Activated CD8-positive, alpha-beta T cell treated with anti-CD3 and anti-CD28 coated beads, Interleukin-2, amount 10 ng/mL, durations not matched to agents 7 days and 5 days (primary cell): ENCODE measurements at regions of chr1 and their contacts with region 1.

Region 1: DNA sequence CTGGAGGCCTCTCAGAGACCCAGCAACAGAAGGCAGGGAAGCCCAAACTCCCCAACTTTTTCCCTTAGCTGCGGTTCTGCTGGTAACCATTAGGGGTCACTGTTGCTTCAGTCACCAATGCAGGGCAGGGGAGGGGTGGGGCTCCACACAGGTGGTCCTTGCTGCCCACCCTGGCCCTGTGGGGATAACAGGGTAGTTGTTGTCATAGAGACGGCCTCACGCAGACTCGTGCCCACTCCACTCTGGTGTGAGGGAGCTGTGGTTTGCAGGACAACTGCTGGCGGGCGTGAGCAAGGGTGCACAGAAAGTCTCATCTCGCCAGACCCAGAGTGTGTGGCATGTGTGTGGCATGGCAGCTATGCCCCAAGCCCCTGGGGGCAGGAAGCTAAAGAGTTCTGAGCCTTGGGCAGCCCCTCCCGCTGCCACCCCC is 19.9 kb downstream of the INSRR start:
- DNase-seq: peak; percentile 67
- ATAC-seq: peak; percentile 66
- H3K4me3 Mint-ChIP-seq: no peak overlapping the region
- H3K27ac Mint-ChIP-seq: no peak overlapping the region
- H3K4me1 Mint-ChIP-seq: peaks cover 48% of the 10 kb centered on the region
- H3K27me3 Mint-ChIP-seq: peaks cover 17% of the 10 kb centered on the region

Region 2: DNA sequence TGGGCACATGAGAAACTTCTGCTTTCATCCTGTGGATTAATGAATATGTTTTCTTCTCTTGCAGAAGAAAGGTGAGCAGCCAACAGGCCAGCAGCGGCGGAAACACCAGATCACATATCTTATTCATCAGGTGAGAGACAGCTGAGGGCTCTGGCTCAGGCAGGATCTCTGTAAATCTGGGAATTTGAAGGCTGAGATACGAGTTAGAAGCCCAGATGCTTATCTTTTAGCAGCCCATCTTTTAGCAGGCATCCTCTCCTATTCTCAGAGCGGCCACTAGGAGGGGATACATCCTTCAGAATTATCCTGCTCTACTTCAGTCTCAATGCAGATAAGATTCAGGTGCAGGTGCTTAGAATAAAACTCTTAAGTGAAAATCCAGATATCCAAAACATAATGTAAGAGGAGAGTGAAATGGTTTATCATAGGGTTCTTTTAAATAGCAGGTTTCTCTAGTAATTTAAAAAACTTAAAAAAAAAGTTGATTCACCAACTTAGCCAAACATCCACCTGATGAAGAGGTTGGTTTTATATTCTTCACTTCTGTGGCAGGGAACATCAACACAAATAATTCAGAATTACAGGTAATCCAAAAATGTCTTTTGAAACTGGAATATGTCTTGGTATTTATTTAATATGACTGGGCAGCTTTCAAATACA is 41.7 kb before region 1 on chr1:
- CTCF ChIA-PET with region 1: interaction called, 47 read pairs
- POLR2A ChIA-PET with region 1: interaction called, 5 read pairs
- DNase-seq: peak; percentile 81
- ATAC-seq: peak; percentile 76
- H3K4me3 Mint-ChIP-seq: no peak overlapping the region
- H3K27ac Mint-ChIP-seq: no peak overlapping the region
- H3K4me1 Mint-ChIP-seq: peaks cover 24% of the 10 kb centered on the region
- H3K27me3 Mint-ChIP-seq: no peaks in the 10 kb centered on the region

Region 3: DNA sequence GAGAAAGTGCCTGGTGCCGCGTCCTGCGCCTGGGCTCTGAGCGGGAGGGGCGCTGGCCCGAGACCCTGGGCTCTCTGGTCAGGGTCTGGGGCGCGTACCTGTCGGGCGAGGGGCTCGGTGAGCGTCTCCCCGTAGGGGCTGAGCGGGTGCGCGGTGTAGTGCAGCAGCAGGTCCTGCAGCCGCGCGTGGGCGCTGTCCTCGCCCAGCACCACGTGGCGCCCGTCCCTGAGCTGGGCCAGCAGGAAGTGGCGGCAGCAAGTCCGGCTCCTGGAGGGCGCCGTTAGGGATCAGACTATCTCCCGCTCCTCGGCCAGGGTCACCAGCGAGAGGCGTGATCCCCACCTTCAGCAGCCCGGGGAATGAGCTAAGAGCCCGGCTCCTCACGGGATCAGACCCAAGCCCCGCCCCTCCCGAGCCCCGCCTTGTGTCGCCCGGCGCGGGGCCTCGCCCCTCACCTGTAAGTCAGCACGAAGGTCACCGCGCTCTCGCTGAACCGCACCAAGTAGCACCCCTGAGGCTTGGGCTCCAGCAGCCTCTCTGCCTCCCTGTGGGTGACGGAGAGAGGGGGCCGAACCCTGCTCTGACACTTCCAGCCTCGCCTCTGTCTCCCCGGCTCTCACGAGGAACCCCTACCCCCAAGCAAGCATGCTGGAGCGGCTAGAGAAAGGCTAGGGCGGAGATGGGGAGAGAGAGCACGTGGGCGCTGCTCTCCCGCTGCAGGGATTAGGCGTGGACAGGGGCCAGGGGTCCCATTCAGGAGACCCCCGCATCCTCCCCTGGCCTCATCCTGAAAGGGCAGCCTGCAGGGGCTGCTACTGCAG is 25.0 kb before region 1 on chr1:
- CTCF ChIA-PET with region 1: interaction called, 98 read pairs
- POLR2A ChIA-PET with region 1: interaction called, 6 read pairs
- DNase-seq: peak; percentile 83
- ATAC-seq: peak; percentile 55
- H3K4me3 Mint-ChIP-seq: peak overlapping the region; percentile 92
- H3K27ac Mint-ChIP-seq: peak overlapping the region; percentile 100
- H3K4me1 Mint-ChIP-seq: peaks cover 70% of the 10 kb centered on the region
- H3K27me3 Mint-ChIP-seq: no peaks in the 10 kb centered on the region

Region 4: DNA sequence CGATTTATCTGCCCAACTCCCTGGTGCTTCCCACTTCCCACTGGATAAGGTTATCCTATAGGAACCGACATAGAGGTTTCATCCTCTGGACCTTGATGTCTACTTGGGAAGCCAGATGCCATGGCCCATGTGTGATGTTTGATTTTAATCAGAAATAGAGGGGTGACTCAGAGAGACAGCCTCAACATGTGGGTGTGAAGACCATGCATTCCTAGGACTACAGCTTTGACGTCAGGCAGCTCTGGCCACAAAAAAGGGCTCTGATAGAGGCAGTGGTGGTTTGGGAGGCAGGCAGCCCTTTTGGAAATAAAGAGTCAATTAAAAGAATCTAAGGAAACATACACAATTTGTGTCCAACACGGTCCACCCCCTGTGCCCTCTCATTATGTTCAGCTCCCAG is 17.2 kb before region 1 on chr1:
- CTCF ChIA-PET with region 1: interaction called, 98 read pairs
- POLR2A ChIA-PET with region 1: interaction called, 5 read pairs
- DNase-seq: no peak
- ATAC-seq: peak; percentile 12
- H3K4me3 Mint-ChIP-seq: no peak overlapping the region
- H3K27ac Mint-ChIP-seq: no peak overlapping the region
- H3K4me1 Mint-ChIP-seq: peaks cover 39% of the 10 kb centered on the region
- H3K27me3 Mint-ChIP-seq: peaks cover 2% of the 10 kb centered on the region

Region 5: DNA sequence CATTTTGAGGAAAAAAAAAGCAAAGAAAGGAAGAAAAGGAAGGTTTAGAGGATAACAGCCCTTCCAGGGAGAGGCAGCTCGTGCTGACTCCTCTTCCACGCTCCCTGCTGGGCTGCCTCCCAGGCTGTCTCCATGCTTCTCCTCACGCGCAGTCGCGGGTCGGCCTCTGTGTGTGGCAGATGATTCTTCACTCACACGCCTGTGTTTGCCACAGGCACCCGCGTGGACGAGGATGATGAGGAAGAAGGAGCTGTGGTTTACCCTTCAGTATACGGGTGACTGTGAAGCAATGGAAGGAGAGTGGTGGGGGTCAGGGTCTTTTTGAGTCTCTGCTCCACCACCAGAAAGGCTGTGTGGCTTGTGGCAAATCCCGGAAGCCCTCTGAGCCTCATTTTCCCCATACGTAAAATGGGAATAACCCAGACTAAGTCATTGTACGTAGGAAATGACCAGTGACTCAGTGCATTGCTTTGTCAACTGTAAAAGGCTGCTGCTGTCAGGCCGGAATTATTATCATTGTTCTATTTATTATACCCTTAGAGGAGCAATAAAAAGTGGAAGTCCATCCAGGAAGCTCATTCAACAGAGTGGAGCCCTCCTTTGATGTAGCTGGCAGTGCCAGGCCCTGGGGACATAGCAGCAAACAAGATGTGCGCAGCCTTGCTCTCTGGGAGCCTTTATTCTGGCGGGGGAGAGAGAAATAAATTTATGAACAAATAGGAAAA is 10.4 kb before region 1 on chr1:
- CTCF ChIA-PET with region 1: interaction called, 38 read pairs
- POLR2A ChIA-PET with region 1: no interaction called
- DNase-seq: no peak
- ATAC-seq: no peak
- H3K4me3 Mint-ChIP-seq: no peak overlapping the region
- H3K27ac Mint-ChIP-seq: no peak overlapping the region
- H3K4me1 Mint-ChIP-seq: peaks cover 4% of the 10 kb centered on the region
- H3K27me3 Mint-ChIP-seq: peaks cover 12% of the 10 kb centered on the region